Mammary epithelial cell (primary cell): ENCODE measurements at regions of chr18 and their contacts with region 1.

Region 1: DNA sequence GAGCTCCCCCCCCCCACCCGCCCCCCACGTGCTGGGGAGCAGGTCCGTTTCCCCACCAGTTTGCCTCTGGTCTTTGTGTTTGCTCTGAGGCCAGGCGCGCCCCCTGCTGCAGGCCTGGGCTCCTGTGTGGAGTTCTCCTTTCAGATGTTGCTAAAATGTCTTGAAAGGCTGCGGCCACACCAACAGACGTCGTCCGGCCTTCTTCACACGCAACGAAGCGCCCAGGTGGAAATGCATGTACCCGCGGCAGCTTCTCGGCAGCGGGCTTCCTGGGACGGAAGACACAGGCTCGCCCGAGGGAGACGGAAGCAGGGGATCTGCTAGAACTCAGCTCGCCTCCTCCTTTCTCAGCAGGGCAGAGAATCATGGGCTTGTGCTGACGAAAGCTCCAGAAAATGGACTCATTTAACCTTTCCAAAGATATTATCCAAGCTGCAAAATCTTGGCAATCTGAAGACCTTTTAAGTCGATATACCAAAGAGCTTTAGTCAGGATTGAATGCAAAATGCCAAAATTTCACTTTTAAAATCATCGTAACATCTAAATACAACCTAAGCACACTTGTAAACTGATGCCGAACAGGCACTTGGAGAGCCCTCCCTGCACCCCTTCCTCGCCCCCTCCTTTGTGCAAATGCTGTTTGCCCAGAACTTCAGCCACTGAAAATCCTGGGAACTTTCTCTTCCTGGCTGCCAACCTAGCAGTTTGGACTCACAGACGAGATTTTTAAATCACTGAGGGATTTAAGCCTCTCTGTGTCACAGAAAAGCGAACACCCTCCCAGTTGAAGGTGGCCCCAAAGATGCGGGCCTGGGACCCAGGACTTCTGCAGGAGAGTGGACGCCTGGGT is 125.5 kb upstream of the ZNF516 start:
- DNase-seq: peak; percentile 74
- H3K4me3 ChIP-seq: peak overlapping the region in 2 of 3 experiments; percentile 36
- H3K27ac ChIP-seq: peak overlapping the region; percentile 61
- H3K4me1 ChIP-seq: peaks cover 41% of the 10 kb centered on the region
- H3K27me3 ChIP-seq: no peaks in the 10 kb centered on the region
- CTCF ChIP-seq: peak; percentile 46 to 78

Region 2: GRCh38 chr18:76398896-76399612 is 221.5 kb before region 1 on chr18:
- CTCF ChIA-PET with region 1: interaction called, 3 read pairs
- dilution Hi-C with region 1: no loop called
- in situ Hi-C with region 1: no loop called
- intact Hi-C with region 1: loop called (anchors 1 kb)
- DNase-seq: peak; percentile 58
- H3K4me3 ChIP-seq: no peak overlapping the region
- H3K27ac ChIP-seq: no peak overlapping the region
- H3K4me1 ChIP-seq: peaks cover 12% of the 10 kb centered on the region
- H3K27me3 ChIP-seq: no peaks in the 10 kb centered on the region
- CTCF ChIP-seq: peak; percentile 97 to 98

Region 3: DNA sequence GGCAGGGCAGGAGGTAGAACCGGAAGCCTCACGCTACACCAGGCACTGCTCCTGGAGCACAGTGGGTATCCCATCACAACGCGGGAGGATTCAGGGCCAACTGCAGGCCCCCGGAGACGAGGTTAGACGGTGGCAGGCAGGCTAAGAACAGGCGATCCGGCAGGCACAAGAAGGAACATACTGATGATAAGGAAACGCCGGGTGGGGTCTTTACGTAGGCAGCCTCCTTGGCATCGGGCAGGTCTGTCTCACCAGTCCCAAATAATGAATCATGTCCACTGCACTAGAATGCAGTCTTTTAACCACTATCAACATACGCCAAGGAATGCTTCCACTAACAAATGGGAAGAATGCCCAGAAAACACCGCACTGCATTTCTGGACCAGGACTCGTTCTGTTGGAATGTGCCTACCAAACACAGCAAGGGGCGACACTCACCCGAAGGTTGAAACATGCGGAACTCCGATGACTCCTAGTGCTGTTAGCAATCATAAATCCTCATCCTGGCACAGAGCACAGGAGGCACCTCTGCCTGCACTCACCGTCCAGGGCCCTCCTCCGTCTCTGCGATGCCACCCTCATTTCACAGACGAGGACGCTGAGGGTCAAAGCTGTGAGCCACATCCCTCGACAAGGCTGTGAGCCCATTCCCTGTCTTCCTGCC is 160.7 kb before region 1 on chr18:
- CTCF ChIA-PET with region 1: interaction called, 3 read pairs
- dilution Hi-C with region 1: no loop called
- in situ Hi-C with region 1: no loop called
- intact Hi-C with region 1: loop called (anchors 1 kb)
- DNase-seq: peak; percentile 99
- H3K4me3 ChIP-seq: peak overlapping the region; percentile 1 to 23 (median 18)
- H3K27ac ChIP-seq: peak overlapping the region; percentile 89
- H3K4me1 ChIP-seq: peaks cover 26% of the 10 kb centered on the region
- H3K27me3 ChIP-seq: no peaks in the 10 kb centered on the region
- CTCF ChIP-seq: peak in 1 of 2 donors; percentile 37

Region 4: DNA sequence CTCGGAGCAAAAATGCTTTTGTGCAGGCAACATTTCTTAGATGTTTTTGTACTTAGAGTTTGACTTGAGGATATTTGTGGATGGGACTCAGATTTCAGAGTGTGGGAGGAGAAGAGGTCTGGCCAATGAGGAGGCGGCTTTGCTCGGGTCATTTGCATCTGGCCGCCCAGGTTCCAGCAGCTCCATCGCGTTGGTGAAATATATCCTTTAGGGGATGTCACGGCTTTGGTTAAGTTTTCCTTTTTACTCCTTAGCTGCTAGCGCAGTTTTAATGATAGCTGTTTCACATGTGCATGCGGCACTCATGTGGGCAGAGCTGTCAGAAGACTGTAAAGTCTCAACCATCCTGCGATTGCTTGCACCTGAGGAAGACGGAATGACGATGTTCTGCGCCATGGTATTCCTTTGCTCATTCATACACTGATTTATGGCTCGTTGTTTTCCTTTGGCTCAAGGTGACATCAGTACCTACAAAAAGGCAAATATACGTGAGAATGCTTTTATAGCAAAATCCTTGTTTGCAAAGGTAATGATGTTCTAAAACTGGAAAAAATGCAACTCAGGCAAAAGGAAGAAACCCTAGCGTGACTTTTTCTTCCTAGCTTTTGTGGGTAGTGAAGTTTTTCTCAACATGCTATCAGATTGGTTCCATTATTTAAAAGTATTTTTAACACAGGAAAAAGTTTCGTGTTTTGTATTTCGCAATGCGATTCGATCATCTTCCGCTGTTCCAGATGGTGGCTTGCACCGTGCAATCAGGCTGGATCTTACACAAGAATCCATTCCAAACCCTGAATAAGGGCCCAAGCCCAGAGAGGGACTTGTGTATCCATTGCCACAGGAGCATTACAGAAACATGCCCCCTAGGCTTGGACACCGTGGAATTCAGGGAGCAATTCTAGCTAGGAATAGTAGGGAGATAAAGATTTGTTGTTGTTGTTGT is 55.0 kb before region 1 on chr18:
- CTCF ChIA-PET with region 1: interaction called, 4 read pairs
- dilution Hi-C with region 1: loop called (anchors 5 kb)
- in situ Hi-C with region 1: no loop called
- intact Hi-C with region 1: loop called (anchors 1 kb)
- DNase-seq: peak; percentile 92
- H3K4me3 ChIP-seq: peak overlapping the region; percentile 34 to 54 (median 37)
- H3K27ac ChIP-seq: peak overlapping the region; percentile 92
- H3K4me1 ChIP-seq: peaks cover 36% of the 10 kb centered on the region
- H3K27me3 ChIP-seq: no peaks in the 10 kb centered on the region
- CTCF ChIP-seq: no peak

Region 5: DNA sequence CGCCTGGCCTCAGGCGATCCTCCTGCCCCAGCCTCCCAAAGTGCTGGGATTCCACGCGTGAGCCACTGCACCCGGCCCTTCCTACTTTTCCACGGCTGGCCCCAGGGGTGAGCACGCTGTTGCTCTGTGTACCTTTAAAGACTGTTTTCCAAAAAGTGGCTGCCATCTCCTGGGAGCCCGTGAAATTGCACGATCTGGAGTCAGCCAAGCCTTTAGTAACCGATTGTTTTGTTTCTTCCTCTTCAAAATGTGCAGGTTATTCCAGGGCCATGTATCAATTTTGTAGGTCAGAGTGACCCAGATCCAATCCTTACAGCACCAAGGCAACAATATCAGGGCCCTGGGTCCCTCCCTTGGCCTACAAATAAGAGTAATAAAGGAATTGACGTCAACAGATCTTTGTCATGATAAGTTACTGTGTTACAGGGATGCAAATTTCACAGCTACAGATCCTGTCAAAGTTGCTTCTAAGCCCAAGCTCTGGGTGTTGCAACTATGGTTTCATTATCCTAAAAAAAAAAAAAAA is 66.3 kb after region 1 on chr18:
- CTCF ChIA-PET with region 1: interaction called, 4 read pairs
- dilution Hi-C with region 1: no loop called
- in situ Hi-C with region 1: no loop called
- intact Hi-C with region 1: loop called (anchors 2 kb)
- DNase-seq: peak; percentile 63
- H3K4me3 ChIP-seq: no peak overlapping the region
- H3K27ac ChIP-seq: peak overlapping the region; percentile 87
- H3K4me1 ChIP-seq: peaks cover 28% of the 10 kb centered on the region
- H3K27me3 ChIP-seq: no peaks in the 10 kb centered on the region
- CTCF ChIP-seq: peak; percentile 61 to 75

Region 6: DNA sequence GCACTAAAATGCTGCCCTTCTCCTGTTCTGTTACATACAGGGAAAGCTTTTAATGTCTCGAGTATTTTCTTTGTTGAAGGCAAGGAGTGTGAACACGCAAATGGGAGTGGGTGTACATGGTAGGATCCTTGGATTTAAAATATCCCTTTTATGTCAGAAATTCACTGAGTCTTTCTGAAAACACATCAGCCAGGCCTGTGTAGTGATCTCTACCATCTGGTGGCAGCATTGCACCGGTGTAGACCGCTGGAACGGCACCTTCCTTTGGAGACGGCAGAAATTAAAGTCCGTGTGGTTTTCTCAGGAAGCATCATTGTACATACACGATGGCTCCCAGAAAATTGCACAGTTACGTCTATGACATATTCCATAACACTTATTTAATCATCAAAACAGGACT is 1144.9 kb after region 1 on chr18:
- CTCF ChIA-PET with region 1: no interaction called
- dilution Hi-C with region 1: no loop called
- in situ Hi-C with region 1: no loop called
- intact Hi-C with region 1: no loop called
- DNase-seq: no peak
- H3K4me3 ChIP-seq: no peak overlapping the region
- H3K27ac ChIP-seq: no peak overlapping the region
- H3K4me1 ChIP-seq: no peaks in the 10 kb centered on the region
- H3K27me3 ChIP-seq: no peaks in the 10 kb centered on the region
- CTCF ChIP-seq: peak in 1 of 2 donors; percentile 20